ENCODE measurements at regions of chr10 and their contacts with region 1.

Region 1: DNA sequence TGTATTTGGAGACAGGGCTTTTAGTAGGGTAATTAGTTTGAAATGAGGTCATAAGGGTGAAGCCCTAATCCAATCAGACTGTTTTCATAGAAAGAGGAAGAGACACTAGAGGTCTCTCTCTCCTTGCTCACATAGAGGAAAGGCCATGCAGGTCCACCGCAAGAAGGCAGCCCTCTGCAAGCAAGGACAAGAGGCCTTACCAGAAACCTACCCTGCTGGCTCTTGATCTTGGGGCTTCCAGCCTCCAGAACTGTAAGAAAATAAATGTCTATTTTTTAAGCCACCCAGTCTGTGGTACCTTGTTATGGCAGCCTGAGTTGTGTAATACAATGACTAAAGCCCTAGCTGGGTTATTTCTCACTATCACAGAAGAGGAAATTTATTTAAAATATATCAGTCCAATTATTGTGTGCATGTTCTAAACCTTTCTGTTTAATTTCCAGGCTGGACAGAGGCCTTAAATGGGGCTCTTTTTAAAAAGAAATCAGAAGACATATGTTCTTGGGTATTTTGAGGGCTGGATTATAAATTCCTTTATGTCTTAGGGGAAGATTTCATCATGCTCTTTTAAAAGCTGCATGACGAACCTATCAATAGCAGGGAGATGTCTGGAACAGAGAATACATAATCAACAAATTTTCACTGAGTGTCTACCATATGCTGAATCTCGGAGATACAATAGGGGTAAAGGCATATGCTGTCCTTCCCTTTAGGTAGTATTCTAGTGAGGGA is 12.9 kb upstream of the TMEM26 start:
- DNase-seq: peak; percentile 23 to 71 (median 41)
- H3K4me3 ChIP-seq: no peak overlapping the region
- H3K4me3 Mint-ChIP-seq: no peak overlapping the region
- H3K27ac ChIP-seq: peak overlapping the region in 1 of 2 donors; percentile 55
- H3K27ac Mint-ChIP-seq: peak overlapping the region; percentile 51 to 90 (median 85)
- H3K4me1 ChIP-seq: peaks cover 20 to 23% of the 10 kb centered on the region in 2 donors
- H3K4me1 Mint-ChIP-seq: peaks cover 21% of the 10 kb centered on the region
- H3K27me3 ChIP-seq: no peaks in the 10 kb centered on the region
- H3K27me3 Mint-ChIP-seq: peaks cover 0 to 2% (median 2%) of the 10 kb centered on the region in 3 donors
- CTCF ChIP-seq: no peak

Region 2: GRCh38 chr10:61262486-61263261 is 203.4 kb before region 1 on chr10:
- intact Hi-C with region 1: no loop called
- DNase-seq: no peak
- H3K4me3 ChIP-seq: no peak overlapping the region
- H3K4me3 Mint-ChIP-seq: no peak overlapping the region
- H3K27ac ChIP-seq: no peak overlapping the region
- H3K27ac Mint-ChIP-seq: no peak overlapping the region
- H3K4me1 ChIP-seq: no peaks in the 10 kb centered on the region
- H3K4me1 Mint-ChIP-seq: no peaks in the 10 kb centered on the region
- H3K27me3 ChIP-seq: no peaks in the 10 kb centered on the region
- H3K27me3 Mint-ChIP-seq: no peaks in the 10 kb centered on the region
- CTCF ChIP-seq: no peak

Region 3: GRCh38 chr10:61486738-61487396 is 20.8 kb after region 1 on chr10:
- intact Hi-C with region 1: loop called in 1 of 2 experiments (anchors 2 kb)
- DNase-seq: peak; percentile 82 to 95 (median 93)
- H3K4me3 ChIP-seq: no peak overlapping the region
- H3K4me3 Mint-ChIP-seq: no peak overlapping the region
- H3K27ac ChIP-seq: no peak overlapping the region
- H3K27ac Mint-ChIP-seq: peak overlapping the region in 5 of 7 donors; percentile 12 to 81 (median 55)
- H3K4me1 ChIP-seq: peaks cover 7 to 11% of the 10 kb centered on the region in 2 donors
- H3K4me1 Mint-ChIP-seq: peaks cover 18% of the 10 kb centered on the region
- H3K27me3 ChIP-seq: peaks cover 16 to 23% of the 10 kb centered on the region in 2 donors
- H3K27me3 Mint-ChIP-seq: peaks cover 13 to 15% (median 15%) of the 10 kb centered on the region in 3 donors
- CTCF ChIP-seq: no peak